ENCODE measurements at regions of chr4 and their contacts with region 1.

Region 1: GRCh38 chr4:57190601-57191481 is 80.7 kb upstream of the IGFBP7 start:
- DNase-seq: no peak
- ATAC-seq: peak; percentile 31

Region 2: DNA sequence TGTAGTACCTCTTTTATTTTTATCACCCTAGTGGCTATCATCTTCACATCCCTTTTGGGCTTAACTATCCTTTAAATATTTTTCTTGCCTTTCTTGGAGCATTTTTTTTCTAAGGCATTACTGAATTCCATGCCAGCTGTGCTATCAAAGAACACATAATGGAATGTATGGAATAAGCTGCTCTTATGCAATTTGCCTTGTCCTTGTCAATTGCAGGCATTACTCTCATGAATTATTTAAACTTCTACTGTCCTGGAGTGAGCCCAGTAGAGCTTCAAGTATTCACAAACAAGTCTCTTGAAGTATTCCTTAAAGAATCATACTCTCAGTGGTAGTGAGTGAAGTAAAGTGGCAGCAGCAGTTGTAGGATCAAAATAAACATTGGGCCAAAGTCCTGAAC is 63.9 kb after region 1 on chr4:
- intact Hi-C with region 1: loop called (anchors 10 kb)
- DNase-seq: no peak
- ATAC-seq: no peak

Region 3: DNA sequence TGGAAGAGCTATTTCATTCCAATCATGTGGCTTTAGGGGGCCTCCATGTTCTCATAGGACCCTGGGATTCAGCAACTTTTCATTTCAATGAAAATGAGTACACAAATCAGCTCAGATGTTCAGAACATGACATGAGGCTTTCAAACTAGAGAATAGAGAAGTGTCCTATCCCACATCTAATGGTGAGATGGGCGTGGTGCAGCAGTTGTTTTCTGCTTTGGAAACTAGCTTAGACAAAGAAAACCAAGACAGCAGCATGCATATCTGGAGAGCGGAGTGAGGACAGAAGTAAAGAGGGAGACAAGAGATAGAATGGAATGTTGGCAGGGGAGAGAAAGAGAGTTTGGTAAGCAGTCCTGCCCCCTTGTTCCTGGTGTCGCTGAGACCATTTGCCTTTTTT is 928.5 kb after region 1 on chr4:
- intact Hi-C with region 1: no loop called
- DNase-seq: no peak
- ATAC-seq: no peak